ENCODE measurements at regions of chr18 and their contacts with region 1.

Region 1: DNA sequence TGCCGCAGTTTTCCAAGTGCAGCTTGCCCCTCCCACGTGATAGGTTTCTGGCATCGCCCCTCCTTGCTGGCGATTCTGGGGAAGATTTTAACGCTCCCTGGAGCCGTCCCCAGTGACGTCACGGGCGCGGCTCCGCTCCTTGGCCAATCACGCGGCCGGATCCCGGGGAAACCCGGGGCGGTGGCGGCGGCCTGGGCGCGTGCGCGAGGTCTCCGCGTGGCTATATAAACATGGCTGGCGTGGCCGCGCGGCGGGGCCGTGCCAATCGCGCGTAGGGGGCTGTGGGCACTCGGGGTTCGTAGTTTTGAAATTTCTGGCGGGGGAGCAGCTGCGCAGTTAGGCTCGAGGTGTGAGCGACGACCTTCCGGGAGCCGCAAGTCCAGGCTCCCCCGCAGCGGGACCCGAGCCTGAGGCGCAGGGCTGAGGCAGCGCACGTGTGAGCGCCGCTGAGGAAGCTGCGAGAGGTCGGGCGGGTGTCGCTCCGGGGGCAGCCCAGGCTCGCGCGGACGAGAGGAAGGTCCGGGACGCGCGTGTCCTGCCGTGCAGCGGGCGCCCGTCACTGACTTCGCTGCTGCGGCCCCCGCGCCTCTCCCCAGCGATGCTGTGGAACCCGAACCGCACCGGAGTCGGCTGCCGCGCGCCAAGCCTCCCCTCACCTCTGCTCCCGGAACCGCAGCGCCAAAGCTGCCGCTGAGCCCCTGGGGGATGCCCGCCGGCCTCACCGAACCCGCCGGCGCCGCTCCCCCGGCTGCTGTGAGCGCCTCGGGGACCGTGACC is at the start of gene TAF4B:
- DNase-seq: peak; percentile 99
- H3K4me3 Mint-ChIP-seq: peak within 1 kb of the TSS; percentile 96
- H3K27ac Mint-ChIP-seq: peak within 1 kb of the TSS; percentile 99
- H3K4me1 Mint-ChIP-seq: peaks cover 32% of the 10 kb centered on the region
- H3K27me3 Mint-ChIP-seq: peaks cover 8% of the 10 kb centered on the region
- total RNA-seq, gene TAF4B: 17.5 and 17.8 TPM in 2 replicates

Region 2: GRCh38 chr18:26090130-26091046 is 136.0 kb before region 1 on chr18 and contains the start of gene SS18:
- intact Hi-C with region 1: loop called (anchors 1 kb)
- DNase-seq: peak; percentile 97
- H3K4me3 Mint-ChIP-seq: peak within 1 kb of the TSS; percentile 97
- H3K27ac Mint-ChIP-seq: peak within 1 kb of the TSS; percentile 97
- H3K4me1 Mint-ChIP-seq: peaks cover 19% of the 10 kb centered on the region
- H3K27me3 Mint-ChIP-seq: no peaks in the 10 kb centered on the region
- total RNA-seq, gene SS18: 66.2 and 70.8 TPM in 2 replicates

Region 3: GRCh38 chr18:26190506-26190905 is 35.9 kb before region 1 on chr18:
- intact Hi-C with region 1: loop called (anchors 5 kb)
- DNase-seq: peak; percentile 83
- H3K4me3 Mint-ChIP-seq: peak overlapping the region; percentile 79
- H3K27ac Mint-ChIP-seq: peak overlapping the region; percentile 77
- H3K4me1 Mint-ChIP-seq: peaks cover 16% of the 10 kb centered on the region
- H3K27me3 Mint-ChIP-seq: no peaks in the 10 kb centered on the region

Region 4: GRCh38 chr18:26215247-26215970 is 11.0 kb before region 1 on chr18:
- intact Hi-C with region 1: loop called (anchors 1 kb)
- DNase-seq: peak; percentile 88
- H3K4me3 Mint-ChIP-seq: peak overlapping the region; percentile 85
- H3K27ac Mint-ChIP-seq: peak overlapping the region; percentile 91
- H3K4me1 Mint-ChIP-seq: peaks cover 22% of the 10 kb centered on the region
- H3K27me3 Mint-ChIP-seq: no peaks in the 10 kb centered on the region

Region 5: GRCh38 chr18:26268454-26268853 is 42.0 kb after region 1 on chr18:
- intact Hi-C with region 1: loop called (anchors 5 kb)
- DNase-seq: no peak
- H3K4me3 Mint-ChIP-seq: no peak overlapping the region
- H3K27ac Mint-ChIP-seq: no peak overlapping the region
- H3K4me1 Mint-ChIP-seq: no peaks in the 10 kb centered on the region
- H3K27me3 Mint-ChIP-seq: no peaks in the 10 kb centered on the region